PC-3 (cell line): ENCODE measurements at regions of chr3 and their contacts with region 1.

Region 1: GRCh38 chr3:181700168-181701087 is 11.3 kb upstream of the SOX2 start:
- DNase-seq: peak; percentile 76
- ATAC-seq: peak; percentile 87
- H3K4me3 ChIP-seq: peak overlapping the region; percentile 41; the same call in 1 of the 2 replicates
- H3K27ac ChIP-seq: no peak overlapping the region
- H3K4me1 ChIP-seq: no peaks in the 10 kb centered on the region; the same call in 1 of the 2 replicates
- H3K27me3 ChIP-seq: peaks cover 73% of the 10 kb centered on the region
- CTCF ChIP-seq: peak; percentile 93

Region 2: DNA sequence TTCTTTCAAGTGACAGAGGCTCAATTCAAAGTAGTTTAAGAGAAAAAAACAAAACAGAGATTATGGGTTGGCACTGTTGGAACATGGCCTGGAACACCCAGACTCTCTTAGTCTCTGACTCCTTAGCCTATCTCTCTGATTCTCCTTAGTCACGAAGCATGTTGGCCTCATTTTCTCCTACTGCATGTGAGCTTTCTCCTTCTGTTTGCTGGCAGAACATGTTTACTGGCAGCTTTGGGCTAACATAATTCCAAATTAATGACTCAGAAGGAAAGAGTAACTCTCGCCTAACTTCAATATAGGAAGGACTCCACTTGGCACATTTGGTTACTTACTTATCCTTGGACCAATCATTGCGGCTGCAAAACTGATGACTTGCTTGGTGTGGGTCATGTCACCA is 999.5 kb before region 1 on chr3:
- CTCF ChIA-PET with region 1: no interaction called
- POLR2A ChIA-PET with region 1: no interaction called
- intact Hi-C with region 1: loop called (anchors 10 kb)
- DNase-seq: peak; percentile 25
- ATAC-seq: no peak
- H3K4me3 ChIP-seq: no peak overlapping the region
- H3K27ac ChIP-seq: no peak overlapping the region
- H3K4me1 ChIP-seq: no peaks in the 10 kb centered on the region
- H3K27me3 ChIP-seq: peaks cover 26% of the 10 kb centered on the region
- CTCF ChIP-seq: no peak

Region 3: GRCh38 chr3:180802837-180803236 is 897.6 kb before region 1 on chr3:
- CTCF ChIA-PET with region 1: no interaction called
- POLR2A ChIA-PET with region 1: no interaction called
- intact Hi-C with region 1: loop called (anchors 2 kb)
- DNase-seq: peak; percentile 52
- ATAC-seq: peak; percentile 72
- H3K4me3 ChIP-seq: no peak overlapping the region
- H3K27ac ChIP-seq: no peak overlapping the region
- H3K4me1 ChIP-seq: no peaks in the 10 kb centered on the region
- H3K27me3 ChIP-seq: peaks cover 21% of the 10 kb centered on the region
- CTCF ChIP-seq: peak; percentile 60

Region 4: DNA sequence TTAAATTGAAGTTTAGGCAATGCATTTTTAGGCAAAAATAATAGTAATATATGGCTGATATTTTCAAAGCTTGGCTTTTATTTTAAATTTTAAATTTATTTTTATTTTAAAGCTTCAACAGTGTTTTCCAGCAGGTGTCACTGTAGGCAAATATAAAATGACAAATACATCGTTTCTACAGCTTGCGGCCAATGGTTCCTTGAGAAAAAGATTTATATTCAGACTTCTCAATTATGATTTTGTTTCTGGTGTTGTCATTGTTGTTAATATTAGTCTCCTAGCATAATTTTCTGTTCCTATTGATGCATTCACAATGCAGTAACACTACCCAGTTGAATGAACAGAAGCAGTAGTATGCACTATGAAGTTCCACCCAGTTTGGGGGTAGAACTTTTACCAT is 490.2 kb before region 1 on chr3:
- CTCF ChIA-PET with region 1: interaction called, 4 read pairs
- POLR2A ChIA-PET with region 1: no interaction called
- intact Hi-C with region 1: loop called (anchors 5 kb)
- DNase-seq: peak; percentile 47
- ATAC-seq: no peak
- H3K4me3 ChIP-seq: no peak overlapping the region
- H3K27ac ChIP-seq: no peak overlapping the region
- H3K4me1 ChIP-seq: no peaks in the 10 kb centered on the region
- H3K27me3 ChIP-seq: peaks cover 31% of the 10 kb centered on the region; the same call in 1 of the 2 replicates
- CTCF ChIP-seq: peak; percentile 49

Region 5: GRCh38 chr3:181326637-181327223 is 373.7 kb before region 1 on chr3:
- CTCF ChIA-PET with region 1: no interaction called
- POLR2A ChIA-PET with region 1: no interaction called
- intact Hi-C with region 1: loop called (anchors 5 kb)
- DNase-seq: peak; percentile 51
- ATAC-seq: no peak
- H3K4me3 ChIP-seq: no peak overlapping the region
- H3K27ac ChIP-seq: no peak overlapping the region
- H3K4me1 ChIP-seq: no peaks in the 10 kb centered on the region
- H3K27me3 ChIP-seq: 0 out of 2 replicates have a peak, but pooled peaks cover 8% of the 10 kb centered on the region
- CTCF ChIP-seq: peak; percentile 84

Region 6: GRCh38 chr3:181567311-181568075 is 132.9 kb before region 1 on chr3:
- CTCF ChIA-PET with region 1: no interaction called
- POLR2A ChIA-PET with region 1: no interaction called
- intact Hi-C with region 1: loop called (anchors 10 kb)
- DNase-seq: no peak
- ATAC-seq: no peak
- H3K4me3 ChIP-seq: no peak overlapping the region
- H3K27ac ChIP-seq: no peak overlapping the region
- H3K4me1 ChIP-seq: no peaks in the 10 kb centered on the region
- H3K27me3 ChIP-seq: peaks cover 43% of the 10 kb centered on the region
- CTCF ChIP-seq: no peak